ENCODE measurements at regions of chr19 and their contacts with region 1.

Region 1: DNA sequence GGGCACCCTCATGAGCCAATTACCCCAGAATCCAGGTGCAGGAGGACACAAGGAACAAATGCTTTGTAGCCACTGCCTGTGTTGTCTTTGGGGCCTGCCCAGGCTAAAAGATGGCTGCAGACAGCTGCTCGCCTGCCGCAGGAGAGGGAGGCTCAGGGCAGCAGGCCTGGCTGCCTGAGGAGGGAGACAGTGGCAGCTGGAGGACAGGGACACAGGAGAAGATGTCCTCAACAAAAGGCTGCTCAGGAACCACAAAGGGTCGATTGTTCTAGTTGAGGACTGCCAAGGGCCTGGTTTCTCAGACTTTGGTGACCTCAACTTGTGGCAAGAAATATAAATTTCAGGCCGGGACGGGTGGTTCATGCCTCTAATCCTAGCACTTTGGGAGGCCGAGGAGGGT is 7.6 kb downstream of the SIRT2 start:
- DNase-seq: no peak
- H3K4me3 Mint-ChIP-seq: no peak overlapping the region
- H3K27ac Mint-ChIP-seq: no peak overlapping the region
- H3K4me1 Mint-ChIP-seq: peaks cover 1% of the 10 kb centered on the region
- H3K27me3 Mint-ChIP-seq: no peaks in the 10 kb centered on the region

Region 2: GRCh38 chr19:38877781-38878574 is 13.8 kb before region 1 on chr19 and contains the start of gene RINL:
- CTCF ChIA-PET with region 1: interaction called, 30 read pairs
- POLR2A ChIA-PET with region 1: interaction called, 3 read pairs
- DNase-seq: peak; percentile 80
- H3K4me3 Mint-ChIP-seq: peak within 1 kb of the TSS; percentile 94
- H3K27ac Mint-ChIP-seq: peak within 1 kb of the TSS; percentile 98
- H3K4me1 Mint-ChIP-seq: peaks cover 41% of the 10 kb centered on the region
- H3K27me3 Mint-ChIP-seq: no peaks in the 10 kb centered on the region
- total RNA-seq, gene RINL: 65.0 to 66.9 TPM

Measured in activated CD4-positive, alpha-beta T cell treated with anti-CD3 and anti-CD28 coated beads, Interleukin-2, amount 10 ng/mL, durations not matched to agents 7 days and 5 days (primary cell).